CD14-positive monocyte (primary cell): ENCODE measurements at regions of chr1 and their contacts with region 1.

Region 1: DNA sequence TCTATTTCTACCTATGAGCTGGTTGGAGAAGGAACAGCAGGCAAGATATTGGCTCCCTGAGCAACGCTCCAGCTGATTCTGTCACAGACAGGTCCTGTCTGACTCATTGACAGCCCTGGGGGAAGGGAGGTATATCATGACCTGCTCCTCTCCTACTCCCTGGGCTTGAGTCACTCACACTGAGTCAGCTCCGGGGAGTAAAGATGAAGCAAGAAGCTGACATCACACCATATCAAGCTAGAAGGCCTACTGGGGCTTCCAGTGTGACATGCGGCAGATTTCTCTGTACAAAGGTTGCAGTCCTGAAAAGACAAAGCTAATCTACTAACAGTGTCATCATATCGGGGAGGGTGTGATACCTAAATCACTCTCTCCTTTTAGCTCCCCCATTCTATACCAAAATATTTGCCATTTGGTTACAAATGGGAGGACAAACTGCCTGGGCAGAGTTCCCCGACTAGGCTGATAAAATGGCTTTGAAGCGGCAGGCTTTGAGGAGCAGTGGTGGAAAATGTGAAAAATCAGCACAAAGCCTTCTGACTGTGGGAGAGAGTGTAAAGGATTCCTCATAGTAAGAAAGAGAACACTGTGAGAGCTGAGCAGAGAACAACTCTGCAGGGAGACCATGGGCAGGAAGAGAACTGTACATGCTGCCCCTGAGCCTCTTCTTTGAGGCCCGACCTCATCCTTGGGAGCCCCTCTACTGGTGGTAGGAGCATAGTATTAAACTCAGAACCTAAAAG is 15.5 kb downstream of the PI4KB start:
- DNase-seq: peak; percentile 94 to 99 (median 96)
- H3K4me3 ChIP-seq: peak overlapping the region in 1 of 3 experiments; percentile 21
- H3K4me3 Mint-ChIP-seq: peak overlapping the region in 1 of 2 donors; percentile 35
- H3K27ac ChIP-seq: peak overlapping the region; percentile 77 to 93
- H3K27ac Mint-ChIP-seq: peak overlapping the region; percentile 88 to 99 (median 97)
- H3K4me1 ChIP-seq: peaks cover 18% of the 10 kb centered on the region in 2 donors
- H3K4me1 Mint-ChIP-seq: peaks cover 24% of the 10 kb centered on the region
- H3K27me3 ChIP-seq: no peaks in the 10 kb centered on the region
- H3K27me3 Mint-ChIP-seq: peaks cover 0 to 2% (median 0%) of the 10 kb centered on the region in 3 donors
- CTCF ChIP-seq: no peak

Region 2: GRCh38 chr1:151130987-151131586 is 180.7 kb before region 1 on chr1:
- intact Hi-C with region 1: no loop called
- DNase-seq: peak; percentile 39 to 53 (median 41)
- H3K4me3 ChIP-seq: peak overlapping the region; percentile 36 to 76 (median 38)
- H3K4me3 Mint-ChIP-seq: peak overlapping the region; percentile 80 to 88
- H3K27ac ChIP-seq: no peak overlapping the region
- H3K27ac Mint-ChIP-seq: peak overlapping the region in 1 of 7 donors; percentile 40
- H3K4me1 ChIP-seq: peaks cover 14 to 16% of the 10 kb centered on the region in 2 donors
- H3K4me1 Mint-ChIP-seq: peaks cover 15% of the 10 kb centered on the region
- H3K27me3 ChIP-seq: peaks cover 0 to 8% of the 10 kb centered on the region in 2 donors
- H3K27me3 Mint-ChIP-seq: peaks cover 8 to 14% (median 8%) of the 10 kb centered on the region in 3 donors
- CTCF ChIP-seq: no peak

Region 3: GRCh38 chr1:151281969-151282882 is 29.5 kb before region 1 on chr1 and contains the start of gene ZNF687:
- intact Hi-C with region 1: no loop called
- DNase-seq: peak; percentile 99
- H3K4me3 ChIP-seq: peak within 1 kb of the TSS; percentile 63 to 96 (median 88)
- H3K4me3 Mint-ChIP-seq: peak within 1 kb of the TSS; percentile 99 to 100
- H3K27ac ChIP-seq: peak within 1 kb of the TSS; percentile 94 to 96
- H3K27ac Mint-ChIP-seq: peak within 1 kb of the TSS; percentile 99 to 100 (median 100)
- H3K4me1 ChIP-seq: peaks cover 43 to 61% of the 10 kb centered on the region in 2 donors
- H3K4me1 Mint-ChIP-seq: peaks cover 42% of the 10 kb centered on the region
- H3K27me3 ChIP-seq: no peaks in the 10 kb centered on the region
- H3K27me3 Mint-ChIP-seq: peaks cover 0 to 1% (median 0%) of the 10 kb centered on the region in 3 donors
- CTCF ChIP-seq: no peak
- polyA plus RNA-seq, gene ZNF687: 1.3 to 26.5 (median 1.8) TPM

Region 4: DNA sequence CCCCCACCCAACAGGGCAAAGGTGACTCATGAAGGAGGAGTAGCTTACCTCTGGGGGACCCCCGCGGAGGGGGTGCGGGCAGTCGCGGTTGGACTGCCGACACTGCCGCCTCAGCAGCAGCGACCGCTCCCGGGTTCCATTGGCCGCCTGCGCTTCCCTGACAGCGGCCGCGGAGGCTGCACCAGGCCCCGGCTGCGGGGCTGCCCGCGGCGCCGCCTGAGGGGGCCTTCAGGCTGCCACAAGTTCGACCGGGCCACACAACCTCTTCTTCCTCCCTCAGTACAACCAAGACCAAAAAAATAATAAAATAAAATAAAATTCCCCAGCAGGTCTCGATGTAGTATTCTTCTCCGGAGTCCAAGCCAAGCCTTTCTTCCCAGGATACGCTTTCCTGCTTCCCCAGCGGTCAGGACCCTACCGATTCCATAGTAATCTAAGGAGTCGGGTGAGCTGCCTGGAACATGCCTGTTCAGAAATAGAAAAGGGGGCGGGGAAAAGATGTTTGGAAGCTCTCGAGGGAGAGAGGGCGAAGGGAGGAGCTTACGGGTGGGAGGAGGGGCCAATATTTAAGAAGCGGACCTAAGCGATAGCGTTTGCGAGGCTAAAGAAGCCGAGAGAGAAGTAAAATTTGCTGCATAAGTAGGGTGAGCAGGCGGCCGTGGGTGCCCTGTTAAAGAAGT is 15.6 kb after region 1 on chr1 and contains the start of gene PI4KB:
- intact Hi-C with region 1: loop called in 1 of 2 experiments (anchors 2 kb)
- DNase-seq: peak; percentile 93 to 96 (median 96)
- H3K4me3 ChIP-seq: peak within 1 kb of the TSS; percentile 49 to 91 (median 80)
- H3K4me3 Mint-ChIP-seq: peak within 1 kb of the TSS; percentile 89 to 99
- H3K27ac ChIP-seq: peak within 1 kb of the TSS; percentile 72 to 86
- H3K27ac Mint-ChIP-seq: peak within 1 kb of the TSS; percentile 95 to 100 (median 97)
- H3K4me1 ChIP-seq: peaks cover 30 to 35% of the 10 kb centered on the region in 2 donors
- H3K4me1 Mint-ChIP-seq: peaks cover 36% of the 10 kb centered on the region
- H3K27me3 ChIP-seq: no peaks in the 10 kb centered on the region
- H3K27me3 Mint-ChIP-seq: peaks cover 1 to 3% (median 3%) of the 10 kb centered on the region in 3 donors
- CTCF ChIP-seq: no peak
- polyA plus RNA-seq, gene PI4KB: 37.8 to 148 (median 50.3) TPM

Region 5: DNA sequence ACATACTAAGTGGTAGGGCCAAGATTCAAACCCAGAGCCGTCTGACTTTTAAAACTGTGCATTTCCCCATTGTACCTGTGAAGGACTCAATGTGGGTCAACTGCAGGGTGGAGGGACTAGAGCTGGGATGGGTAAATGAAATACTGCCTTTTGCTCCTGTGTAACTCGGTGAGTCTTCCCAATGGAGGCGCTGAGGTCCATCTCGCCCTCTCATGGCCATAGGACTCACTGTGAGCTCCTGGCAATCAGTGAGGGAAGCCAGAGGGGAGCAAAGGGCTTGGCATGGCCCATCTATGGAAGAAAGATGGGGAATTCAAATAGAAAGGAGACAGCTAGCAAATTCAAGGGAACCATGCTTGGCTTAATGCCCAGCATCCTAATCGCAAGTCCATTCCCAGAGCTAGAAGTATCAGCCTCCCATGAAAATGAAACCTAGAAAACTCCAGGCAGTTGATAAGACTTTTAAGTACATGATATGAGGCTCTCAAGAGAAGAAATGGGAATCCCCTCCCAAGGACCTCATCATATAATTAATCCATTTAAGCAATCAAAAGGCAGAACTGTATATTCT is 174.0 kb after region 1 on chr1:
- intact Hi-C with region 1: no loop called
- DNase-seq: no peak
- H3K4me3 ChIP-seq: no peak overlapping the region
- H3K4me3 Mint-ChIP-seq: no peak overlapping the region
- H3K27ac ChIP-seq: no peak overlapping the region
- H3K27ac Mint-ChIP-seq: no peak overlapping the region
- H3K4me1 ChIP-seq: no peaks in the 10 kb centered on the region
- H3K4me1 Mint-ChIP-seq: no peaks in the 10 kb centered on the region
- H3K27me3 ChIP-seq: no peaks in the 10 kb centered on the region
- H3K27me3 Mint-ChIP-seq: peaks cover 8 to 9% (median 8%) of the 10 kb centered on the region in 3 donors
- CTCF ChIP-seq: no peak